ENCODE measurements at regions of chr17 and their contacts with region 1.

Region 1: GRCh38 chr17:65027305-65027704 is 29.2 kb downstream of the GNA13 start:
- DNase-seq: peak; percentile 45
- ATAC-seq: peak; percentile 66
- H3K4me3 ChIP-seq: no peak overlapping the region
- H3K27ac ChIP-seq: peak overlapping the region; percentile 84
- H3K4me1 ChIP-seq: peaks cover 70% of the 10 kb centered on the region
- H3K27me3 ChIP-seq: no peaks in the 10 kb centered on the region
- CTCF ChIP-seq: peak; percentile 16 to 45 (median 42); a peak in 4 of 6 replicates
- EP300 ChIP-seq: peak; percentile 47; a peak in 2 of 4 replicates
- POLR2A ChIP-seq: no peak
- RAD21 ChIP-seq: peak; percentile 46

Region 2: DNA sequence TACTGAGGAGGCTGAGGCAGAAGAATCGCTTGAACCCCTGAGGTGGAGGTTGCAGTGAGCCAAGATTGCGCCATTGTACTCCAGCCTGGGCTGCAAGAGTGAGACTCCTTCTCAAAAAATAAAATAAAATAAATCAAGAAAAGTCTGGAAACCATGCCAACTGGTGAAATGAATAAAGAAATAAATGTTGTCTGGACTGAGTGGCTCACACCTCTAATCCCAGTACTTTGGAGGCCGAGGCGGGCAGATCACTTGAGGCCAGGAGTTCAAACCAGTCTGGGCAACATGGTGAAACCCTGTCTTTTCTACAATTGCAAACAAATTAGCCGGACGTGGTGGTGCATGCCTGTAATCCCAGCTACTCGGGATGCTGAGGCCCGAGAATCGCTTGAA is 107.3 kb before region 1 on chr17:
- CTCF ChIA-PET with region 1: no interaction called
- POLR2A ChIA-PET with region 1: no interaction called
- RAD21 ChIA-PET with region 1: no interaction called
- SMC1A ChIA-PET with region 1: no interaction called
- in situ Hi-C with region 1: no loop called
- intact Hi-C with region 1: no loop called
- DNase-seq: no peak
- ATAC-seq: peak; percentile 24
- H3K4me3 ChIP-seq: peak overlapping the region; percentile 77; the same call in 1 of the 2 replicates
- H3K27ac ChIP-seq: peak overlapping the region; percentile 76
- H3K4me1 ChIP-seq: peaks cover 10% of the 10 kb centered on the region
- H3K27me3 ChIP-seq: no peaks in the 10 kb centered on the region
- CTCF ChIP-seq: no peak
- EP300 ChIP-seq: no peak
- POLR2A ChIP-seq: no peak
- RAD21 ChIP-seq: no peak

Region 3: DNA sequence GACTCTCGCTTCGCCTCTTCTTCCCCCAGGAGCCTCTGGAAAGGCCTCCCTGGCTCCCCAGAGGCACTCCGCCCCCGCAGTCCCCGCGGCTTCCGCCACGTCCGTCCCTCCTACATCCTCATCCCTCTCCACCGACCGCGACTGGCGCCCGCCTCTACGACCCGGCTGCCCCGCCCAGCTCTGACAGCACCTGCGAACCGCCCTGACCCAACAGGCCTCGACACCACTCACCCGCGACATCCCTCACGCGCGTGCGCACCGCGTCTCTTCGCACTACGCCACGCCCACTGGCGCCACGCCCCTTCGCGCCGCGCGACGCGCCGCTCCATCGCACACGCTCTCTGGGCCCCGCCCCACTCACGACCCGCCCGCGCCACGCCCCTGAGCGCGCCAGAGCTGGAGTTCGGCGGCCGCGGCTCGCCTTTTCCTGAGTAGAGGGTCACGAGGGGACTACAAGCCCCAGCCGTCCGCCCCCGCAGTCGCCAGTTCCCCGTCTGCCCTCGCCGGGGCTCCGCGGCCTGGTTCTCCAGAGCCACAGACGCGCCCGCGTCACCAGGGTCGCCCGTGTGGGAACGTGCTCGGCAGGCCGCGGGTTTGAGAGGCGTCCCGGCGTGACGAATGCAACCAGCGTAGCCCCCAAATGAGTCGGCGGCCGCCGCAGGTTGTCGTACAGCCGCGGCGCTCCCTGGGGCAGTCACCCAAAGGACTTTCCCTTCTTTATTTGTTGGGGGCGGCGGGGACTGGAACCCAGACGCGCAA is 51.8 kb before region 1 on chr17:
- CTCF ChIA-PET with region 1: no interaction called
- POLR2A ChIA-PET with region 1: interaction called, 12 read pairs
- RAD21 ChIA-PET with region 1: interaction called, 20 read pairs
- SMC1A ChIA-PET with region 1: interaction called, 11 read pairs
- in situ Hi-C with region 1: no loop called
- intact Hi-C with region 1: loop called (anchors 1 kb)
- DNase-seq: peak; percentile 95
- ATAC-seq: peak; percentile 87
- H3K4me3 ChIP-seq: peak overlapping the region; percentile 85
- H3K27ac ChIP-seq: peak overlapping the region; percentile 93
- H3K4me1 ChIP-seq: peaks cover 31% of the 10 kb centered on the region
- H3K27me3 ChIP-seq: no peaks in the 10 kb centered on the region
- CTCF ChIP-seq: no peak
- EP300 ChIP-seq: peak; percentile 59 to 64; a peak in 2 of 4 replicates
- POLR2A ChIP-seq: peak; percentile 83
- RAD21 ChIP-seq: no peak

Region 4: GRCh38 chr17:65008882-65009281 is 18.4 kb before region 1 on chr17:
- CTCF ChIA-PET with region 1: interaction called, 3 read pairs
- POLR2A ChIA-PET with region 1: interaction called, 3 read pairs
- RAD21 ChIA-PET with region 1: interaction called, 4 read pairs
- SMC1A ChIA-PET with region 1: interaction called, 26 read pairs
- in situ Hi-C with region 1: no loop called
- intact Hi-C with region 1: no loop called
- DNase-seq: no peak
- ATAC-seq: peak; percentile 38; the same call in 1 of the 3 replicates
- H3K4me3 ChIP-seq: no peak overlapping the region
- H3K27ac ChIP-seq: peak overlapping the region; percentile 13; the same call in 1 of the 2 replicates
- H3K4me1 ChIP-seq: peaks cover 37% of the 10 kb centered on the region
- H3K27me3 ChIP-seq: no peaks in the 10 kb centered on the region
- CTCF ChIP-seq: no peak
- EP300 ChIP-seq: no peak
- POLR2A ChIP-seq: no peak
- RAD21 ChIP-seq: no peak

Region 5: DNA sequence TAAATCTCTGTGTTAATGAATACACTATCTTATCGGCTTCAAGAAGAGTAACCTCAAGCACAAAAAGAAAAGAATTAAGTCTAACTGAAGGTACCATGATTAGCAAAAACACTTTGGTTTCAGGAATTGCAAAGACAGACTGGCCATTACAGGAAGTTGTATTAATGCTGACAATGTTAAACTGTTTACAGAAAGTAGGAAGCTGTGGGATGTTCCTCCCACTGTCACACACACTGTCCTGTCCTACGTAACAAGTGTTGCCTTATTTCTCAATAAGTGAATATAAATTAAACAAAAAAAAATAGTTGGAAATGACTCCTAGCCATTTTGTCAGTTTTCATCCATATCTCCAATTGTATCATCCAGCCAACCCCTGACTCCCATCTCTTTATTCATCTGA is 20.6 kb after region 1 on chr17:
- CTCF ChIA-PET with region 1: interaction called, 9 read pairs
- POLR2A ChIA-PET with region 1: interaction called, 9 read pairs
- RAD21 ChIA-PET with region 1: interaction called, 20 read pairs
- SMC1A ChIA-PET with region 1: interaction called, 84 read pairs
- in situ Hi-C with region 1: no loop called
- intact Hi-C with region 1: no loop called
- DNase-seq: no peak
- ATAC-seq: peak; percentile 28; the same call in 1 of the 3 replicates
- H3K4me3 ChIP-seq: peak overlapping the region; percentile 48
- H3K27ac ChIP-seq: peak overlapping the region; percentile 43
- H3K4me1 ChIP-seq: peaks cover 33% of the 10 kb centered on the region
- H3K27me3 ChIP-seq: no peaks in the 10 kb centered on the region
- CTCF ChIP-seq: no peak
- EP300 ChIP-seq: no peak
- POLR2A ChIP-seq: no peak
- RAD21 ChIP-seq: no peak

Region 6: GRCh38 chr17:65122836-65123756 is 95.8 kb after region 1 on chr17:
- CTCF ChIA-PET with region 1: no interaction called
- POLR2A ChIA-PET with region 1: no interaction called
- RAD21 ChIA-PET with region 1: no interaction called
- SMC1A ChIA-PET with region 1: no interaction called
- in situ Hi-C with region 1: no loop called
- intact Hi-C with region 1: no loop called
- DNase-seq: peak; percentile 66
- ATAC-seq: peak; percentile 77
- H3K4me3 ChIP-seq: peak overlapping the region; percentile 60
- H3K27ac ChIP-seq: peak overlapping the region; percentile 73
- H3K4me1 ChIP-seq: peaks cover 20% of the 10 kb centered on the region
- H3K27me3 ChIP-seq: no peaks in the 10 kb centered on the region
- CTCF ChIP-seq: no peak
- EP300 ChIP-seq: no peak
- POLR2A ChIP-seq: peak; percentile 90
- RAD21 ChIP-seq: no peak

Measured in GM12878 (cell line).